ENCODE measurements at regions of chr15 and their contacts with region 1.

Region 1: GRCh38 chr15:83559310-83559966 is 94.5 kb upstream of the ADAMTSL3 start:
- DNase-seq: peak; percentile 11
- H3K4me3 Mint-ChIP-seq: no peak overlapping the region
- H3K27ac Mint-ChIP-seq: no peak overlapping the region
- H3K4me1 Mint-ChIP-seq: no peaks in the 10 kb centered on the region
- H3K27me3 Mint-ChIP-seq: peaks cover 10% of the 10 kb centered on the region

Region 2: DNA sequence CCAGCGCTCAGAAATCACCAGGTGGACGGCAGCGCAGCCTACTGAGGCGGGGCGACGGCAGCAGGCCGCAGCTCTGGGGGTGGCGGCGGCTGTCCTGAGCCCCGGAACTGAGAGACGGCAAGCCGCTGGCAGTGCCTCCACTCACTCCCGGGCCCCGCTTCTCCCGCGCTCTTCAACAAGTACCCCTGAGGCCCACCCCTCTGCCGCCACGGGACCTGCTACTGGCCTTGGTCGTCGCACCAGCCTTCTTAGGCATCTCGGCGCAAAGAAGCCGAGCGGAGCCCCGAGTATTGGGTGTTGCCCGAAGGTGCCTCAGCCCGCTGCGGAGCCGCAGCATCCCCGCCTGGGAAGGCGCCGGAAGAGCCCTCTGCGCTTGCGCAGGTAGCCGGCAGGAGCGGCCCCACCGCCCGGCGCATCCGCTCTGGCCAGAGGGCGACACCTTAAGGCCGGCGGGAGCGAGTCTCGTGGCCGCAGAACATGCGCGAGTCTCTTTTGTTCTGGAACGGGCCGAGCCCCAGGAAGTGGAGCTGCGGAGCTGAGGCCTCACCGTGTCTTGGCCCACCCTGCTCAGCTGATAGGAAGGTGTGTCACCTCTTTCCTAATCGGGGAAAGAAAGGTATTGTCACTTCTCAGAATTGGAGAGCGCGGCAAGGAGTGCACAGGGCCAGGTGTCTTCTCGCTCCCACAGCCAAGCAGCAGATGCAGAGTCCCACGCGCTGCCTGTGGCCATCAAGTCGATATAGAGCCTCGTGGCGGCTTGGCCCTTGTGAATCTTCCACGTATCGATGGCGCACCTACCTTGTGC is 548.0 kb before region 1 on chr15 and contains the start of gene C15orf40:
- intact Hi-C with region 1: loop called (anchors 1 kb)
- DNase-seq: peak; percentile 84
- H3K4me3 Mint-ChIP-seq: peak within 1 kb of the TSS; percentile 99
- H3K27ac Mint-ChIP-seq: peak within 1 kb of the TSS; percentile 98
- H3K4me1 Mint-ChIP-seq: peaks cover 50% of the 10 kb centered on the region
- H3K27me3 Mint-ChIP-seq: no peaks in the 10 kb centered on the region
- total RNA-seq, gene C15orf40: 24.2 and 29.0 TPM in 2 replicates

Region 3: GRCh38 chr15:83248151-83249029 is 311.0 kb before region 1 on chr15:
- intact Hi-C with region 1: loop called (anchors 1 kb)
- DNase-seq: peak; percentile 29
- H3K4me3 Mint-ChIP-seq: no peak overlapping the region
- H3K27ac Mint-ChIP-seq: no peak overlapping the region
- H3K4me1 Mint-ChIP-seq: no peaks in the 10 kb centered on the region
- H3K27me3 Mint-ChIP-seq: peaks cover 28% of the 10 kb centered on the region

Region 4: DNA sequence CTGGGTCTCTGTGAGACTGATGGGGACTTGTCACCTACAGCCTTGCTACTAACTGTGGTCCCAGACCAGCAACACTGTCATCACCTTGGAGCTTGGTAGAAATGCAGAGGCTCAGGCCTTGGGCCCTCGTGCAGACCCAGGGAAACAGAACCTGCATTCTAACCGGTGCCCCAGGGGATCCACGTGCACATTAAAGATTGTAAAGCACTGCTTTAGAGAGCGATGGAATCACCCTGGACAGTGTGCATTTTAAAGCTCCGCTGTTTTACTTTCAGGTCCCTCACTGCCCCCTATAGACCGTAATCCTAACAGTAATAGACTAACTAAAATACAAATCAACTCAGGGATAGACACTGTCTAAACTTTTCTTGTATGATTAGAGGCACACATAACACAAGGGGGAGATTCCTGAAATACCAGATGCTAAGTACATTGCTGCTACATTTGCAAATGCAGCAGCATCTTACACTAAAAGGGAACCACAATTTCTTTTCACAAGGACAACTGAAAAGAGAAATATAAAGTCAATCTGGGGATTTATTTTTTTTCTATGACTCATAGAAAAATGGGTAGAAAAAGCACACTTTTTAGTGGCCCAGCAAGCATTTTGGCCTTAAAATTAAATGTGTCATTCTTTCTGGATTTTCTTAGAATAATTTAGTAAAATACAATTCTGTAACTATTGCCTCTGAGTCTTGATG is 122.8 kb before region 1 on chr15:
- intact Hi-C with region 1: loop called (anchors 1 kb)
- DNase-seq: no peak
- H3K4me3 Mint-ChIP-seq: no peak overlapping the region
- H3K27ac Mint-ChIP-seq: no peak overlapping the region
- H3K4me1 Mint-ChIP-seq: peaks cover 6% of the 10 kb centered on the region
- H3K27me3 Mint-ChIP-seq: peaks cover 9% of the 10 kb centered on the region